HEK293T (cell line): ENCODE measurements at regions of chrX and their contacts with region 1.

Region 1: DNA sequence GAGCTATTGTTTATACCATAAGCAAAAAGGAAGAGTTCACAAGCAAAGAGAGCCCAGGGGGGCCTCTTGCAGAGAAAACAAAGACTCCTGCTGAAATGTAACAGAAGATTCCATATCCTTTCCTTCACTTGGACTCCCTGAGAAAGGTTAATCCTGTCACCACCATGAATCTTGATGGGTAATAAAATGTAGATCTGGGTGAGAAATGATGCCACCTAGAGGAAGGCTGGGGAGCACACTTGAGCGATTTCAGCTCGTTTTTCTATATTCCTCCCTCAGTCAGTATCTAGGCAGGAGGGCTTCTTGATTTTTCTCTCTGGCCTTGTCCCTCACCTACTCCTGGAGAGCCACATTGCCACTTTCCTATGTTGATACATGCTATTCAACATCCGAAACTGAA is 10.2 kb upstream of the KCNE5 start:
- DNase-seq: peak; percentile 66

Region 2: DNA sequence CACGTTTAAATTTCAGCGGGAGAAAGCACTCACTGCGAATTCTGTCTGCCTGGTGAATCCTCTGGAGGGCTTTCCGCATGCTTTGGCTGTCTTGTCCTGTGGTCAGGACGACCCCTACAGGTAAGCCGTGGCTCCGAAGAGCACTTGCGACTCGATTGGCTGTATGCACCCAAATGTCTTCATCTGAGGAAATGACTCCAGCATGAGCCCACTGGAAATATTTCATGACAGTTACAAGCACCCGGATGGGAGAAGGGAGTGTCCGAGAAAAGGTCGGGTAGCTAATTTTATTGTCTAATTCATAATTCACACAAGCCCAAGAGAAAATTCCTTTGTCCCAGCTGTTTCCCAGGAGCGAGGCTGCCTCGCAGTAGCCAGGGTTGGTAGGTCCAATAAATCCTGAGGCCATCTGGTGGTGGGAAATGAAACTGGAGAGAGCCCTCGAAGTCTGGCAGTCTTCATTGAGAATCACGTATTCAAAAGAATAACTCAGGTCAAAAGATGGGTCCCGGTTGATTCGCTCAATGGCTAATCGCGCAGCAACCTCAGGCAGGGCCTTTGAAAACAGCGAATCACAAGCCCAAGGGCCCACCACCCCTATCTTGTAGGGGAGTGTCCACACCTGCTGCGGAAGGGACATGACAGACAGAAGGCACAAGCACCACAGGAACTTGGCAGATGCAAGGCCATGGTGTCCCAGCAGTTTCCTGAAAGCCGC is 159.8 kb before region 1 on chrX:
- CTCF ChIA-PET with region 1: interaction called, 12 read pairs
- POLR2A ChIA-PET with region 1: no interaction called
- DNase-seq: peak; percentile 79

Region 3: GRCh38 chrX:109485470-109486340 is 149.5 kb before region 1 on chrX:
- CTCF ChIA-PET with region 1: interaction called, 63 read pairs
- POLR2A ChIA-PET with region 1: no interaction called
- DNase-seq: peak; percentile 76